ENCODE measurements at regions of chr18 and their contacts with region 1.

Region 1: DNA sequence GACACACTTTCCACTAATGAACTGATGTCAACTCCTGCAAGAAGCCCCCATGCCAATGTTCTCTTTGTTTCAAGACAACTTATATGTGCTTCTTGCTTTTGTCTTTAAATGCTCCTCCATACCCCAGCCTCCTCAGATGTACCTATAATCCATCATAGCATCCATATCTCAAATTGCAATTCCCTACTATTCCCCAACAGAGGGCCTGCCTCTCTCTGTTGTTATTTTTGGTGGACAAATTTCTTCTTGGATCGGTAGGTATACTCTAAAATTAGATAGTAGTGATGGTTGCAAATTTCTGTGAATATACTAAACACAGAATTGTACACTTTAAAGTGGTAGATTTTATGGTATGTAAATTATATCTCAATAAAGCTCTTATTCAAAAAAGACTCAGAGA is 820.1 kb downstream of the METTL4 start:
- DNase-seq: no peak
- ATAC-seq: no peak
- H3K4me3 ChIP-seq: no peak overlapping the region
- H3K27ac ChIP-seq: no peak overlapping the region
- H3K4me1 ChIP-seq: no peaks in the 10 kb centered on the region
- H3K27me3 ChIP-seq: no peaks in the 10 kb centered on the region
- CTCF ChIP-seq: no peak

Region 2: GRCh38 chr18:1244397-1245122 is 506.7 kb before region 1 on chr18:
- intact Hi-C with region 1: no loop called
- DNase-seq: no peak
- ATAC-seq: no peak
- H3K4me3 ChIP-seq: no peak overlapping the region
- H3K27ac ChIP-seq: no peak overlapping the region
- H3K4me1 ChIP-seq: no peaks in the 10 kb centered on the region
- H3K27me3 ChIP-seq: no peaks in the 10 kb centered on the region
- CTCF ChIP-seq: no peak

Region 3: GRCh38 chr18:1811282-1811681 is 60.0 kb after region 1 on chr18:
- intact Hi-C with region 1: loop called in 1 of 10 experiments (anchors 10 kb)
- DNase-seq: no peak
- ATAC-seq: no peak
- H3K4me3 ChIP-seq: no peak overlapping the region
- H3K27ac ChIP-seq: no peak overlapping the region
- H3K4me1 ChIP-seq: no peaks in the 10 kb centered on the region
- H3K27me3 ChIP-seq: no peaks in the 10 kb centered on the region
- CTCF ChIP-seq: no peak

Measured in heart right ventricle (tissue), 16 donors.